G401 (cell line): ENCODE measurements at regions of chr3 and their contacts with region 1.

Region 1: GRCh38 chr3:185815391-185816282 is 9.2 kb downstream of the IGF2BP2 start:
- DNase-seq: no peak

Region 2: DNA sequence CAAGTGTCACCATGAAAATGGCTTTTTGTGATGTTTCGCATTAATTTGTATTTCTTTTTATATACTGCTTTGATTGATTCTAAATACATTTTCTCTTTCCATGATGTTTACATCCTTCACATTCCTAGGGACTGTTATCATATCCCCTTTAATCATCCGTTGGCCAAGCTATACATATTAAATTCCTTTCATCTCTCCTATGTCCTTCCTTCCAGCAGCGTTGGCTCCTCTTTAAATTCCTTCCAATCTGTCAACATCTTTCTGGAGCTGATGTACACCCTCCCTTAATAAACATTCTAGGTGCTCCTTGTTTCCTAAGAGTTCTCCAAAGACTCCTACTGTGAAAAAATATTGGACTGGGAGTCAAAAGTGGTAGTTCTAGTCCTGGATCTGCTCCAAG is 78.6 kb before region 1 on chr3:
- in situ Hi-C with region 1: loop called (anchors 5 kb)
- DNase-seq: no peak